Endothelial cell of umbilical vein (primary cell): ENCODE measurements at regions of chr14 and their contacts with region 1.

Region 1: DNA sequence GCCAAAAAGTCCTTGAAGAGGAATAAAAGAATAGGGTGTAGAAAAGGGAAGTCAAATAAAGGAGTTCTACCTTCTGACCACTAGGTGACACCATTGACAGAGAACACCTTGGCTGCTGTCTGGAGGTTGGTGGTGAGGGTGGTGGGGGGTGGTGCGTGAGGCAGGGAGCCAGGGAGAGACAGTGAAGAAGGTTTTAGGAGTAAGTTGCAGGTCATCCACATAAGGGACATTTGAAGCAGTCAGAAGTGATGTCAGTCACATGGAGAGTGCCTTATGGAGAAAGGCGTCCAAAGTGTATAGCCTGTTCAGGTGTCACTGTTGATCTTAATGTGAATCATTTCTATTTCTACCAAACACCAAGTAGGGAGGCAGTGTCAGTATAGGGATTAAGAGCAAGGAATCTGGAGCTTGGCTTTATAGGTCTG is 279.3 kb upstream of the DDHD1 start:
- DNase-seq: peak; percentile 70
- H3K4me3 ChIP-seq: no peak overlapping the region
- H3K27ac ChIP-seq: no peak overlapping the region
- H3K4me1 ChIP-seq: no peaks in the 10 kb centered on the region
- H3K27me3 ChIP-seq: peaks cover 6 to 14% of the 10 kb centered on the region in 2 experiments
- CTCF ChIP-seq: peak; percentile 64 to 68
- POLR2A ChIP-seq: no peak

Region 2: DNA sequence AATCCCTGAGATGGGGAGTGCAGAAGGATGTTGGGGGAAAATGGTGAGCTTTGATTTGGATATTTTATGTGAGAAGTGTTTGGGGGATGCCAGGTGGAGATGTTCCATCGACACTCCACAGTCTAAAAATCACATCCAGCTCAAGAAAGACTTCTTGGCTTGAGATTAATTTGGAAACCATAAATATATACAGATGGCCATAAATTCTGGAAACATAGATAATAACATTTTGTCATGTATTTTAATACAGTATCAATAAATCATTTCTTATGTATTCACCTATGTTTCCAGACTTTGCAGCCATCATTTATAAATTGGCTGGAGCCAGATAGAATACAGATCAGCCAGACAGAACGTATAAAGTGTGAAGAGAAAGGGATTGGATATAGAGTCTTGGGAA is 33.8 kb before region 1 on chr14:
- CTCF ChIA-PET with region 1: no interaction called
- POLR2A ChIA-PET with region 1: no interaction called
- dilution Hi-C with region 1: no loop called
- intact Hi-C with region 1: no loop called
- DNase-seq: no peak
- H3K4me3 ChIP-seq: no peak overlapping the region
- H3K27ac ChIP-seq: no peak overlapping the region
- H3K4me1 ChIP-seq: no peaks in the 10 kb centered on the region
- H3K27me3 ChIP-seq: no peaks in the 10 kb centered on the region
- CTCF ChIP-seq: no peak
- POLR2A ChIP-seq: no peak

Region 3: DNA sequence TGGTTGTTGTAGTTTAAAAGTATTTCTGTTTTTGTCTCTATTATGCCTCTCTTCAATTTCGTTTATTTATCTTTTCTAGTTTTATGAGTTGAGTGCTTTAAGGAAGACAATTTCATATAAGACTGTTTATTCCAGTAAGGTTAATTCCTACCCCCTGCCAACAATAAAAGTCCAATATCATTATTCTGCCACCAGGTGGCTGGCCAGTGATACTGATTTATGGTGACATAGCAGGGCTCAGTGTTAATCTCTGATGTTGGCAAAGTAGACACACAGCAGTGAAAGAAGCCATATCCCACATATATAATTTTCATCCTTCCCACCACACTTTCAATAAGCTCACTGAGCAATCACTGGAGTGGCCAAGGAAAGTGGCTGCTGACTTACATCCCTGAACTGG is 593.3 kb after region 1 on chr14:
- CTCF ChIA-PET with region 1: no interaction called
- POLR2A ChIA-PET with region 1: no interaction called
- dilution Hi-C with region 1: no loop called
- intact Hi-C with region 1: loop called (anchors 10 kb)
- DNase-seq: peak; percentile 73
- H3K4me3 ChIP-seq: no peak overlapping the region
- H3K27ac ChIP-seq: no peak overlapping the region
- H3K4me1 ChIP-seq: no peaks in the 10 kb centered on the region
- H3K27me3 ChIP-seq: no peaks in the 10 kb centered on the region
- CTCF ChIP-seq: peak; percentile 27 to 46
- POLR2A ChIP-seq: no peak

Region 4: GRCh38 chr14:54211551-54212308 is 779.3 kb after region 1 on chr14:
- CTCF ChIA-PET with region 1: no interaction called
- POLR2A ChIA-PET with region 1: no interaction called
- dilution Hi-C with region 1: no loop called
- intact Hi-C with region 1: loop called (anchors 1 kb)
- DNase-seq: peak; percentile 86
- H3K4me3 ChIP-seq: no peak overlapping the region
- H3K27ac ChIP-seq: peak overlapping the region; percentile 91
- H3K4me1 ChIP-seq: peaks cover 25% of the 10 kb centered on the region
- H3K27me3 ChIP-seq: no peaks in the 10 kb centered on the region
- CTCF ChIP-seq: no peak
- POLR2A ChIP-seq: no peak